ENCODE measurements at regions of chr11 and their contacts with region 1.

Region 1: GRCh38 chr11:72814286-72815109 is at the start of gene ATG16L2:
- DNase-seq: peak; percentile 89
- H3K4me3 ChIP-seq: peak within 1 kb of the TSS; percentile 46 to 72 (median 58)
- H3K27ac ChIP-seq: peak within 1 kb of the TSS; percentile 88
- H3K4me1 ChIP-seq: peaks cover 22% of the 10 kb centered on the region
- H3K27me3 ChIP-seq: no peaks in the 10 kb centered on the region
- CTCF ChIP-seq: peak in 1 of 2 donors; percentile 35
- total RNA-seq, gene ATG16L2: 3.3 to 23.0 TPM

Region 2: GRCh38 chr11:72585762-72586311 is 228.7 kb before region 1 on chr11:
- CTCF ChIA-PET with region 1: no interaction called
- dilution Hi-C with region 1: no loop called
- in situ Hi-C with region 1: no loop called
- intact Hi-C with region 1: loop called (anchors 10 kb)
- DNase-seq: peak; percentile 53
- H3K4me3 ChIP-seq: no peak overlapping the region
- H3K27ac ChIP-seq: no peak overlapping the region
- H3K4me1 ChIP-seq: peaks cover 8% of the 10 kb centered on the region
- H3K27me3 ChIP-seq: peaks cover 10% of the 10 kb centered on the region
- CTCF ChIP-seq: peak; percentile 80 to 83

Region 3: GRCh38 chr11:72693271-72693968 is 121.1 kb before region 1 on chr11:
- CTCF ChIA-PET with region 1: no interaction called
- dilution Hi-C with region 1: loop called (anchors 5 kb)
- in situ Hi-C with region 1: no loop called
- intact Hi-C with region 1: no loop called
- DNase-seq: no peak
- H3K4me3 ChIP-seq: no peak overlapping the region
- H3K27ac ChIP-seq: no peak overlapping the region
- H3K4me1 ChIP-seq: no peaks in the 10 kb centered on the region
- H3K27me3 ChIP-seq: no peaks in the 10 kb centered on the region
- CTCF ChIP-seq: no peak

Region 4: DNA sequence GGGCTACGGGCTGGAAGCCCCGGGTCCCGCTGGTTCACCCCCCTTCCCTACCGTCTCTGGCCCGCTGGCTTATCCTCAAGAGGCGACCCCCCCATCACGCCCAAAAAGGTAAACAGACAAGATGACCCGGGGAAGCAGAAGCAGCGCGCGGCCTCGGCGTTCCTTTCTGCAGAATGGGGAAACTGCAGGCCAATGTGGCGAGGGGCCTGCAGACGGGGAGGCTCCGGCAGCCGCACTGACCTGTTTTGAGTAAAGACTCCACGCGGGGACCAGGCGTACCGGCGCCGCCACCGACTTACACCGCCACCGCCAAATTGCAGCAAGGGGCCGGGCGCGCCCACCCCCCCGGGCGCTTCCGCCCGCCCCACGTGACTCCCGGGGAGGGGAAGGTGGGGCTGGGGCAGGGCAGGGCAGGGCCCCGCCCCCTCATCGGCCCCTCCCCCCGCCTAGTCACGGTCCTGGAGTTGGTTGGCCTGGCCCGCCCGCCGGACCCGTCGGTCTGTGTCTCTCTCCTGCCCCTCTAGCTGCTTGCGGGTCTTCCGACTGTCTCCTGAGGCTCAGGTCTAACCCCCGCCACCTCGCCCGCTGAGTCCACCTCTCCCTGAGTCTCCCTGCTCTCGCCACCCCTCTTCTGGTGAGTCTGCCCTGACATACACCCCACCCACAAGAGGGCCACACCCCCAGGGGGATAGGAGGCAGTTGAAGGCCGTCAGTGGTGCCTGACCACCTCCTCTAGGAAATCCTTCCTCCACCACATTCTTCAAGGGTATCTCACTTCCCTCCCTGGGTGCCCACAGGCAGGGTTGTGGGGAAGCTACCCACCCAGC is 62.2 kb before region 1 on chr11 and contains the start of gene ARAP1:
- CTCF ChIA-PET with region 1: no interaction called
- dilution Hi-C with region 1: loop called (anchors 5 kb)
- in situ Hi-C with region 1: no loop called
- intact Hi-C with region 1: no loop called
- DNase-seq: peak; percentile 57
- H3K4me3 ChIP-seq: peak within 1 kb of the TSS; percentile 66 to 75 (median 72)
- H3K27ac ChIP-seq: no peak within 1 kb of the TSS
- H3K4me1 ChIP-seq: peaks cover 12% of the 10 kb centered on the region
- H3K27me3 ChIP-seq: no peaks in the 10 kb centered on the region
- CTCF ChIP-seq: no peak
- total RNA-seq, gene ARAP1: 56.8 to 78.3 TPM

Region 5: GRCh38 chr11:72793425-72794367 is 20.8 kb before region 1 on chr11 and contains the start of gene STARD10:
- CTCF ChIA-PET with region 1: interaction called, 8 read pairs
- dilution Hi-C with region 1: no loop called
- in situ Hi-C with region 1: no loop called
- intact Hi-C with region 1: loop called (anchors 1 kb)
- DNase-seq: peak; percentile 94
- H3K4me3 ChIP-seq: peak within 1 kb of the TSS; percentile 63 to 69 (median 68)
- H3K27ac ChIP-seq: peak within 1 kb of the TSS; percentile 60
- H3K4me1 ChIP-seq: peaks cover 25% of the 10 kb centered on the region
- H3K27me3 ChIP-seq: no peaks in the 10 kb centered on the region
- CTCF ChIP-seq: peak; percentile 61 to 92
- total RNA-seq, gene STARD10: 32.8 to 63.0 TPM